Activated CD4-positive, alpha-beta T cell treated with anti-CD3 and anti-CD28 coated beads for 36 hours (primary cell): ENCODE measurements at regions of chr7 and their contacts with region 1.

Region 1: DNA sequence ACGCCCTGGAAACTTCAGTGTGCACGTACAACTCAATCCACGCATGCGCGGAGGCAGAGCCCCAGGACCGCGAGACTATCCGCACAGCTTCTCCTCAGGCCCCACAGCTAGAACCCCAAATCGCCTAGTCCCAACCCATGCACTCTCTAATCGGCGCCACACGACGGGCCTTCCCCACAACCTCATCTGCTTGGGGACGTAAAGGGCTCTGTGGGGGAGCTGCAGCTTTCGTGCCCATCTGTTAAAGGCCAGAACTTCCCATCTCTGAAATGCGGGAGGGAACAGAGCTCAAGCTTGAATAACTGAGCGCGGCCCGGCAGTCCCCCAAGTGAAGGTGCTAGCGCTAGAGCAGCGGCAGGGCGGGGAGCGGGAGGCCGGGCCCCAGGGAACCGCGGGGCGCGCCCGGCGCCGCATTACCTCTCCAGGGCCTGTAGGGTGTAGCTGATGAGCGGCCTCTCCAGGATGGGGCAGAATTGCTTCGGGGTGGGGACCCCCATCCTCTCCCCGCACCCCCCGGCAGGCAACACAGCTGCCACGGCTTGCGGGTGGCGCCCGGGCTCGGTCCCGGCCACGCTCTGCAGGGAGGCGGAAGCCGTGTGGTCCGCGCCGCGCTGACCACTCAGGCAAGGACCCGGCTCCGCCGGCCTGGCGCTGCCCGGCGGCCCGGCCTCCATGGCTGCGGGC is 547 bp downstream of the CRPPA start:
- DNase-seq: peak; percentile 93
- ATAC-seq: peak; percentile 93
- H3K4me3 Mint-ChIP-seq: peak overlapping the region; percentile 78
- H3K27ac Mint-ChIP-seq: peak overlapping the region; percentile 97
- H3K4me1 Mint-ChIP-seq: peaks cover 20% of the 10 kb centered on the region
- H3K27me3 Mint-ChIP-seq: no peaks in the 10 kb centered on the region

Region 2: DNA sequence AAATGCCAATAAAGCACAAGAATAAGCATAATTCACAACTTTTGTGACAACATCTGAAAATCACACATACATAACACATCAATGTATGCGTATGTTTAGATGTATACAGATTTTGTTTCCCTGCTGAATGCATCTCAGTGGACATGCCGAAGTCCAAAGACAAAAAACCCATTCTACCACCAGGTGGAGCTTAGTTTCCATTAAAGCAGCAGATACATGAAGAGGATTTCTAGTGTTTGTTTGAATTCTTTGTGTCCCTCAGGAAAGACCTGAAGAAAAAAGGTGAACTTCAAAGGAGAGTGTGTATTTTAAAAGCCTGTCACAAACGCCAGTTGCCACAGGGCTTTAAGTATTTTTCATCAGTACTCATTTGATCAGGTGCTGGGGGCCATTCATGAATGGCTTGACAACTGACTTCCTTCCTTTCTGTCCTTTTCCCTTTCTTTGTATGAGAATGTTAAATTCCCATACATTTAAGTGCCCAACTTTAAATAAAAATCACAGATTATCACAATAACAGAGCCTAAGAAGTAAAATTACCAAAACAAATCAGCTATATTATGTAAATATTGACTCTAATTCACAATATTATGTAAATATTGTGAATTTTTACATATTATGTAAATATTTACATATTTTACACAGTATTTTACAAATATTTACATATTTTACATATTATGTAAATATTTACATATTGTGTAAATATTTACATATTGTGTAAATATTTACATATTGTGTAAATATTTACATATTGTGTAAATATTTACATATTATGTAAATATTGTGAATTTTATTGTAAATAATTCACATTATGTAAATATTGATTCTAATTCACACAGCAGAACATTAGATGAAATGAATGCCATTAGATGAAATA is 342.5 kb before region 1 on chr7:
- CTCF ChIA-PET with region 1: interaction called, 3 read pairs
- POLR2A ChIA-PET with region 1: no interaction called
- intact Hi-C with region 1: loop called in 1 of 2 experiments (anchors 2 kb)
- DNase-seq: peak; percentile 23
- ATAC-seq: peak; percentile 49
- H3K4me3 Mint-ChIP-seq: no peak overlapping the region
- H3K27ac Mint-ChIP-seq: no peak overlapping the region
- H3K4me1 Mint-ChIP-seq: no peaks in the 10 kb centered on the region
- H3K27me3 Mint-ChIP-seq: no peaks in the 10 kb centered on the region

Region 3: GRCh38 chr7:16753102-16753931 is 332.5 kb after region 1 on chr7 and contains the start of gene TSPAN13:
- CTCF ChIA-PET with region 1: no interaction called
- POLR2A ChIA-PET with region 1: no interaction called
- intact Hi-C with region 1: loop called in 1 of 2 experiments (anchors 5 kb)
- DNase-seq: peak; percentile 83
- ATAC-seq: peak; percentile 93
- H3K4me3 Mint-ChIP-seq: peak within 1 kb of the TSS; percentile 71
- H3K27ac Mint-ChIP-seq: no peak within 1 kb of the TSS
- H3K4me1 Mint-ChIP-seq: peaks cover 12% of the 10 kb centered on the region
- H3K27me3 Mint-ChIP-seq: peaks cover 27% of the 10 kb centered on the region
- total RNA-seq, gene TSPAN13: 0.47 to 0.64 TPM